Left cardiac atrium (tissue), 4 donors: ENCODE measurements at regions of chr17 and their contacts with region 1.

Region 1: GRCh38 chr17:57995076-57995956 is 7.3 kb upstream of the VEZF1 start:
- DNase-seq: peak; percentile 52
- ATAC-seq: peak; percentile 89 to 93

Region 2: DNA sequence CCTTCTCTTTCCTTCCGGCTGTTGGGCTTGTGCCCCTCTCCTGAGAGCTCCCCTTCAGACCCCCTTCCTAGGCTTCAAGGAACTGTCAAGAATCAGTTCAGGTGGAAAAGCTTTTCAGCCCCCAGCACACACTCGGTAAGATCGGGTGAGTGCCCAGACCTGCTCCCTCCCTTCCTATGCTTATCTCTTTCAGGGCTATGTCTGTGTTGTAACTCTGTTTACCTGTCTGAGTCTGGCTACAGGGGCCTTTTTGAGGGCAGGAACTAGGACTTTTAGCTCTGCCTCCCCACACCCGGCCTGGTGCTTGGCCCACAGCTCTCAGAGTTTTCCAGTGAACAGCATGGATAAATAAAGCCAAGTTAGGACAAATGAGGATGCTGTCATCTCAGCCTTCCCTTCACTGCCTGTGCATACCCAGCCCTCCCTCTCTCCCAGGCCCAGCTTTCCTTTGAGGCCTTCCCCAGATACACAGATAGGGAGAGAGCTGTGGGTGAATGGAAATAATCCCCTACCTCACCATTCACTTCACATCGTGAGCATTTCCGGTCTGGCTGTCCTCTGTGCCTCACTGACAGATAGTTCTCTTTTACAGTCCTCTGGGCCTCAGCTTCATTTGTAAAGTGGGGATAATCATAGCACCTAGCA is 139.8 kb before region 1 on chr17:
- intact Hi-C with region 1: loop called (anchors 2 to 5 kb)
- DNase-seq: no peak
- ATAC-seq: no peak

Region 3: GRCh38 chr17:57902800-57903759 is 92.2 kb before region 1 on chr17:
- intact Hi-C with region 1: no loop called
- DNase-seq: peak; percentile 85
- ATAC-seq: peak; percentile 45 to 80

Region 4: DNA sequence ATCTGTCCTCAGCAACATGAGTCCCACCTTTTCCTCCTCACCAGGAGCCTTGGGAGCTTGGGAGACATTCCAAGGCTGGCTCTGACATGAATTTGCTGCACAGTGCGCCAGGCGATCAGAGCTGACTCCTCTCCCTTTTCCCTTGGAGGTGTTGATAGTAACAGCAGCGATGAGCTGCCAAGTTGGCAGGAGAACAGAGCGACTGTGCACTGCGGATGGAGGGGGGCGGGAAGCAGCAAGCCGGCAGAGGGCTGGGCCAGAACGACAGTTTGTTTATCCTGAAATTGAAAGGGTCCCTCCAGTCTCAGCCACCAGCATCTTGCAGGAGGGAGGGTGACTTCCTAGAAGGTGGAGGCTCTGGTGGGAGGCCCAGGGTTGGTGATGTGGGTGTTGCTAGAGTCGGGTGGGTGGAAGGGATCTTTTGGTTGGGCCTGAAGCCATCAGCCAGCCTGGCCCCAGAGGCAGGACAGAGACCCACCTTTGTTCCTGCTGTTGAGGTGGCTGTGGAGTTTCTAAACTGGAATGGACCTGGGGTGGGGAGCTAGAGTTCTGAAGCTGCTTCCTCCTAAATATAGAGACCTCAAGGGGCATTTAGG is 65.4 kb after region 1 on chr17:
- intact Hi-C with region 1: no loop called
- DNase-seq: peak; percentile 69
- ATAC-seq: peak; percentile 96 to 97